ENCODE measurements at regions of chr1 and their contacts with region 1.

Region 1: DNA sequence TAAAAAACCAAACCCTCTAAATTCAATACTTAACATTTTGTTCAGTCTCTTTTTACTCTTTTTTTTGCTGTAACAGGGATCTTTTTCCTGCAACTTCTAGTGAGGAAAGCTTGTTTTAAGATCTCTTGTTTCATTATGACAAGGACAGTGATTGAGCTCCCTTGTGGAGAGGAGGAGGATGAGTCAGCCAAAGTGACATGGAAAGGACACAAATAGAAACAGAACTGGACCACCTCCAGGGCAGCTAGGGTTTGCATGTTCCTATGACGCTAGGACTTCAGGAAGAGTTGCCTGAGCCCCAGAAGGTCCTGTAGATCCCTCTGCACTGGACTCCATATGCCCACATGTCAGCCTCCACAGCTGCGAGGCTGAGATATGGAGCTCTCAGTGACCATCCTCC is 212.6 kb upstream of the FAM78B start:
- DNase-seq: no peak
- H3K4me3 ChIP-seq: no peak overlapping the region
- CTCF ChIP-seq: no peak

Region 2: GRCh38 chr1:166283190-166283589 is 96.3 kb before region 1 on chr1:
- in situ Hi-C with region 1: loop called (anchors 5 kb)
- DNase-seq: no peak
- H3K4me3 ChIP-seq: no peak overlapping the region
- CTCF ChIP-seq: no peak

Region 3: DNA sequence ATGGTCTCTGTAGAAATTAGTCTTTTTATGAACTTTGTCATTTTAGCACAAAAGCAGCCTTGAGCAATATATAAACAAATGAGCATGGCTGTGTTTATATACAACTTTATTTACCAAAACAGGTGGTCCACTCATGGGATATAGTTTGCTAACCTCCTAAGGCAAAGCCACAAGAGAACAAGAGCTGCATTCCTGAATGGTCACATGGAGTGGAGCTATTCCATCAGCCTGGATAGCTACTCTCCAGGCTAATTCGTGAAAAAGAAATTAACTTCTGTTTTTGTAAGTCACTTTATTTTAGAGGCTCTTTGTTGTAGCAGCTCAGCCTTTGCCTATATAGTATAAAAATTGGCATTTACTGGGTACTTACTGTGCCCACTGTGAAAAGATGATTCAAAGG is 49.4 kb before region 1 on chr1:
- in situ Hi-C with region 1: loop called (anchors 5 kb)
- DNase-seq: no peak
- H3K4me3 ChIP-seq: no peak overlapping the region
- CTCF ChIP-seq: no peak

Region 4: GRCh38 chr1:166457700-166458099 is 78.3 kb after region 1 on chr1:
- in situ Hi-C with region 1: loop called (anchors 10 kb)
- DNase-seq: no peak
- H3K4me3 ChIP-seq: no peak overlapping the region
- CTCF ChIP-seq: no peak

Measured in astrocyte of the cerebellum (primary cell).